Activated CD4-positive, alpha-beta T cell treated with anti-CD3 and anti-CD28 coated beads, Interleukin-2, amount 10 ng/mL, durations not matched to agents 24 days and 14 days (primary cell): ENCODE measurements at regions of chr16 and their contacts with region 1.

Region 1: GRCh38 chr16:46812781-46813540 is 18.0 kb downstream of the C16orf87 start:
- DNase-seq: peak; percentile 52
- H3K4me3 Mint-ChIP-seq: peak overlapping the region; percentile 6
- H3K27ac Mint-ChIP-seq: peak overlapping the region; percentile 77
- H3K4me1 Mint-ChIP-seq: peaks cover 41% of the 10 kb centered on the region
- H3K27me3 Mint-ChIP-seq: no peaks in the 10 kb centered on the region

Region 2: GRCh38 chr16:46789499-46790414 is 23.2 kb before region 1 on chr16:
- intact Hi-C with region 1: loop called (anchors 2 kb)
- DNase-seq: peak; percentile 95
- H3K4me3 Mint-ChIP-seq: peak overlapping the region; percentile 79
- H3K27ac Mint-ChIP-seq: peak overlapping the region; percentile 69
- H3K4me1 Mint-ChIP-seq: peaks cover 18% of the 10 kb centered on the region
- H3K27me3 Mint-ChIP-seq: peaks cover 15% of the 10 kb centered on the region

Region 3: GRCh38 chr16:46908540-46909372 is 95.8 kb after region 1 on chr16:
- intact Hi-C with region 1: no loop called
- DNase-seq: peak; percentile 88
- H3K4me3 Mint-ChIP-seq: no peak overlapping the region
- H3K27ac Mint-ChIP-seq: peak overlapping the region; percentile 54
- H3K4me1 Mint-ChIP-seq: peaks cover 11% of the 10 kb centered on the region
- H3K27me3 Mint-ChIP-seq: no peaks in the 10 kb centered on the region